Activated naive CD4-positive, alpha-beta T cell treated with anti-CD3 and anti-CD28 coated beads, Interleukin-2, amount 10 ng/mL, durations not matched to agents 7 days and 5 days (primary cell): ENCODE measurements at regions of chr11 and their contacts with region 1.

Region 1: GRCh38 chr11:30128269-30128932 is 102.4 kb upstream of the FSHB start:
- DNase-seq: no peak
- H3K4me3 Mint-ChIP-seq: no peak overlapping the region
- H3K27ac Mint-ChIP-seq: no peak overlapping the region
- H3K4me1 Mint-ChIP-seq: no peaks in the 10 kb centered on the region
- H3K27me3 Mint-ChIP-seq: no peaks in the 10 kb centered on the region

Region 2: GRCh38 chr11:30143098-30143705 is 14.8 kb after region 1 on chr11:
- CTCF ChIA-PET with region 1: interaction called, 42 read pairs
- DNase-seq: no peak
- H3K4me3 Mint-ChIP-seq: no peak overlapping the region
- H3K27ac Mint-ChIP-seq: no peak overlapping the region
- H3K4me1 Mint-ChIP-seq: no peaks in the 10 kb centered on the region
- H3K27me3 Mint-ChIP-seq: no peaks in the 10 kb centered on the region

Region 3: DNA sequence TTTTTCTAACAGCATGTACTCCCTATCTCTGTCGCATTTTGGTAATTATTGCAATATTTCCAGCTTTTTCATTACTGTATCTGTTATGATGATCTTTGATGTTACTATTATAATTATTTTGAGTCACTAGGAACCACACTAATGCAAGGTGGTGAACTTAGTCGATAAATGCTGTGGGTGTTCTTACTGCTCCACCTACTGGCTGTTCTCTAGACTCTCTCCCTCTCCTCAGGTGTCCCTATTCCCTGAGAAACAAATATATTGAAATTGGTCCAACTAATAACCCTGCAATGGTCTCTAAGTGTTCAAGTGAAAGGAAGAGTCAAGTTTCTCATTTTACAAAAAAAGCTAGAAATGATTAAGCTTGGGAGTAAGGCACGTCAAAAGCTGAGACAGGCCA is 205.0 kb after region 1 on chr11:
- CTCF ChIA-PET with region 1: interaction called, 11 read pairs
- DNase-seq: no peak
- H3K4me3 Mint-ChIP-seq: no peak overlapping the region
- H3K27ac Mint-ChIP-seq: no peak overlapping the region
- H3K4me1 Mint-ChIP-seq: peaks cover 11% of the 10 kb centered on the region
- H3K27me3 Mint-ChIP-seq: no peaks in the 10 kb centered on the region